ENCODE measurements at regions of chr5 and their contacts with region 1.

Region 1: GRCh38 chr5:37495210-37495609 is 116.1 kb downstream of the WDR70 start:
- DNase-seq: peak; percentile 14
- H3K4me3 ChIP-seq: no peak overlapping the region
- H3K27ac ChIP-seq: no peak overlapping the region
- H3K4me1 ChIP-seq: peaks cover 14% of the 10 kb centered on the region
- H3K27me3 ChIP-seq: no peaks in the 10 kb centered on the region
- CTCF ChIP-seq: peak in 1 of 2 donors; percentile 29

Region 2: GRCh38 chr5:37471666-37472197 is 23.5 kb before region 1 on chr5:
- CTCF ChIA-PET with region 1: no interaction called
- dilution Hi-C with region 1: no loop called
- in situ Hi-C with region 1: no loop called
- intact Hi-C with region 1: no loop called
- DNase-seq: no peak
- H3K4me3 ChIP-seq: no peak overlapping the region
- H3K27ac ChIP-seq: no peak overlapping the region
- H3K4me1 ChIP-seq: no peaks in the 10 kb centered on the region
- H3K27me3 ChIP-seq: no peaks in the 10 kb centered on the region
- CTCF ChIP-seq: no peak

Region 3: DNA sequence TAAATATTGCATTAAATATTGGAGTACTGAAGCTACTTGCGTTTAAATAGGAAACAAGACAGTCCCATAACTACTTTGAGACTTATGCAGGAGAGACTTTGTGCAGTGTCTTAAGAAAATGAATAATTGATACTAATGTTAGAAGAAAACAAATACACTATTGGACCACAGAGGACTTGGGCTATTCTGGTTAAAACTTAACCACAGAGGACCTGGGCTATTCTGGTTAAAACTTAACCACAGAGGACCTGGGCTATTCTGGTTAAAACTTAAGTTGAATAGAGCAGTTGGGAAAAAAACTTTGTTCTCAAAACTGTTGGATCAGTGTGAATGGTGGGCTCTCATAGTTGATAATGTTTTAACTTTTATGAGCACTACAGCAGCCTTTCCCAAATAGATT is 25.6 kb after region 1 on chr5:
- CTCF ChIA-PET with region 1: interaction called, 10 read pairs
- dilution Hi-C with region 1: no loop called
- in situ Hi-C with region 1: no loop called
- intact Hi-C with region 1: no loop called
- DNase-seq: no peak
- H3K4me3 ChIP-seq: no peak overlapping the region
- H3K27ac ChIP-seq: no peak overlapping the region
- H3K4me1 ChIP-seq: no peaks in the 10 kb centered on the region
- H3K27me3 ChIP-seq: no peaks in the 10 kb centered on the region
- CTCF ChIP-seq: no peak